Gastrocnemius medialis (tissue), 4 donors: ENCODE measurements at regions of chrX and their contacts with region 1.

Region 1: DNA sequence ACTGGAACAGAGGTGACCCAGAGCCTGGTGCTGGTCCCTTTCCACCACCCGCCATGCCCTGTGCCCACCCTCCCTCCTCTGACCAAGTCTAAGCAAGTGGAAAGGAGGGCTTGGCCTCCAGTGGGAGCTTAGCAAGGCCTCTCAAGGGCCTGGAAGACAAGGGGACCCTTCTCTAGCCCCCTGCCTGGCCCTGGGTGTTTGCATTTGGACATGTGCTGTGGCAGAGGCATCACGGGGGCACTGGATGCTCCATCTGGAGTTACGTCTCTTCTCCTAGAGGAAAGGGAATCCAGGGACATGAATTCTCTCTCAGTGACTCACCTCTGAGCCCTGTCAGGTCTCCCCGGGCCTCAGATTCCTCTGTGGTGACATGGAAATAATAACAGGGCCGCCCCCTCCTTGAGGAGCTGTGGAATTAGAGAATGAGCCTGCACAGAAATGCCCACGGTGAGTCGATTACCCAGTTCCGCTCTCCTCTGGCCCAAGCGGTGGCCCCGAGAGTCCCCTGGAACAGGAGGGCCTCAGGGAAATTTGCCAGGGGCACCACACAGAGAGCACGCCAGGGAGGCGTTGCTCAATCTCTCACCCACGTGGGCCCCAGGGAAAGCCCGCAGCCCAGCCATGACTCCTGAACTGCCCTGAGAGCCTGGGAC is 189.7 kb downstream of the BCOR start:
- DNase-seq: peak; percentile 49 to 72
- ATAC-seq: peak; percentile 93 to 97
- H3K4me3 ChIP-seq: peak overlapping the region in 1 of 4 donors; percentile 28
- H3K27ac ChIP-seq: peak overlapping the region; percentile 54 to 76 (median 70)
- H3K4me1 ChIP-seq: peaks cover 0 to 18% of the 10 kb centered on the region in 2 donors
- H3K27me3 ChIP-seq: no peaks in the 10 kb centered on the region
- CTCF ChIP-seq: no peak
- POLR2A ChIP-seq: no peak

Region 2: GRCh38 chrX:39519030-39519488 is 389.0 kb before region 1 on chrX:
- in situ Hi-C with region 1: no loop called
- intact Hi-C with region 1: no loop called
- DNase-seq: no peak
- ATAC-seq: peak in 1 of 2 donors; percentile 42
- H3K4me3 ChIP-seq: peak overlapping the region; percentile 19 to 34 (median 26)
- H3K27ac ChIP-seq: peak overlapping the region; percentile 55 to 70 (median 63)
- H3K4me1 ChIP-seq: peaks cover 0 to 5% of the 10 kb centered on the region in 2 donors
- H3K27me3 ChIP-seq: no peaks in the 10 kb centered on the region
- CTCF ChIP-seq: no peak
- POLR2A ChIP-seq: no peak

Region 3: DNA sequence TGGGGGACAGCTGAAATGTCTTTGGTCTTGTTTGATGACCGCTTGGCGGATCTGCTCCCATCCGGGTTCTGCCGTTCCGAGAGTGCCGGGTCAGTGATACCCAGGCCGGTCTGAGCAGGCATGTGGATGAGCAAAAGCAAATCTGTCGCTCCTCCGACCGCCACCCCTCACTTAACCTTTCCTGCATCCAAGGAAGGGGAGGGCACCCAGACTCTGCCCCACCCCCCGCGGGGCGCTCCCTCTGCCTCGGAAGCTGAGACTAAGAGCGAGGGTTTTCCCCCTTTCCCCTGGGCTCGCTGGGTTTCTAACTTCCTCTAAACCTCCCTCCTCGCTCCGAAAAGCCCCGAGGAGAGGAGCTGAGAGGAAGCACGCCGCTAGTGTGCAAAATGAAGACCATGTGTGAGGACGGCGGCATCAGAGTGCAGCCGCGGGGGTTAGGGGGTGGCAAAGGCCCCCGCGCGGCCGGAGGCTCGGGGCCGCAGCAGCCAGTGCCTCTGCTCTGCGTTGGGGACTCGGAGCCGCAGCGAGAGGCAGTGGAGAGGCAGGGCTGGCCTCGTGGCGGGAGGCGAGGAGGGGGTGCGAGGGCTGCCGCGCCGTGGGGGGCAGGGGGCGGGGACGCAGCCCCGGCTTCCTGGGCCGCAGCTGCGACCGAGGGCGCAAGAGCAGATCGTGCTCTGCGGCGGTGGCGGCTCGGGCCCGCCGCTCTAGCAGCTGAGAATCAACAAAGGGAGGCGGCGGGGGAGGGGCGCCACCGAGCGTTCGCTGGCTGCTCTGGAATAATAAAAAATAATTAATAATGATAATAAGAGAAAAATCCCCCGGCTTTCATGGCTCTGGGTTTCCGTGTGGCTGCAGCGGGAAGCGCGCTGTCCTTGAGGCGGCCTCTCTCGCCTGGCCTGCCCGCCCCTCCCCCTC is 245.5 kb after region 1 on chrX:
- in situ Hi-C with region 1: no loop called
- intact Hi-C with region 1: loop called (anchors 5 kb)
- DNase-seq: peak in 1 of 2 donors; percentile 30
- ATAC-seq: peak; percentile 6 to 20
- H3K4me3 ChIP-seq: peak overlapping the region; percentile 50 to 63 (median 60)
- H3K27ac ChIP-seq: peak overlapping the region; percentile 77 to 86 (median 82)
- H3K4me1 ChIP-seq: peaks cover 4 to 18% of the 10 kb centered on the region in 2 donors
- H3K27me3 ChIP-seq: peaks cover 0 to 22% (median 5%) of the 10 kb centered on the region in 3 donors
- CTCF ChIP-seq: peak in 1 of 5 experiments; percentile 20
- POLR2A ChIP-seq: no peak

Region 4: DNA sequence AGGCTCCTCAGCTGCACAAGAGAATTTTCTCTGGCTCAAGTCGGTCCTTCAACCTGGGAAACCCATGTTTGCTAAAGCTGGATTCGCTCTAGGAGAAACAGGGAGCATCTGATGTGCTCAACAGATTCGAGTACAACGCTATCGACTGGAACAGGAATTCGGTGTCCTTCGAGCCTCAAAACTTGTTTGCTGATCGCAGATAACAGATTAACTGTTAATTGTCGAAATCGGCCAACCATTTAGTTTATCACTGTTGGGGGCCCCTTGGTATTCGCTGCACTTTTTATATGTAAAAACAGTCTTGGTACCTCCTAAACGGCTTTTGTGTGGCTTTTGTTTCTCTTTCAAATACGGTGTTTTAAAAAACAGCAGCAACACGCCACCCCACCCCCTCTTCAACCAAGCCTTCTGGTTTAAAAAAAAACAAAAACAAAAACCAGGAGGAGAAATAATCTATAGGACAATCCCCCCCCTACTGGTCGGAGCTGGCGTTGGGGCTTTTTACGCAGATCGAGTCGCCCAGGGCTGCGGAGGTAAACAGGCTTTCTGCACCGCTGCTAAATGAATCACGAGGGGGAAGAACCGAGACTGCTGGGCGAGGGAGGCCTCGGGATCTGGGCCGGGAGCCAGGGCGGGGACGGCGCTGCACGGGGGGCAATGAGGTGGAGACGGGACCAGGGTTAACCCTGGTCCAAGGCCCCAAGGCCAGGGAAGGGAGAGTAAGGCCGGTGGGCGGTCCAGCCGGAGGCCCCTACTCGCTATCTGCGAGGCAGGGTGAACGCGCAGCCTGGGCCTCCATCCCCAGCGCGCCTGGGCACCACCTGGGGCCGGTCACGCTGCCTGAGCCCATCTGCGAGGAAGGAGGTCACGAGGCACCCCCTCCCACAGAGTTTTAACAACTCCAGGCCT is 261.4 kb after region 1 on chrX:
- in situ Hi-C with region 1: no loop called
- intact Hi-C with region 1: loop called (anchors 5 kb)
- DNase-seq: no peak
- ATAC-seq: no peak
- H3K4me3 ChIP-seq: peak overlapping the region in 1 of 4 donors; percentile 2
- H3K27ac ChIP-seq: no peak overlapping the region
- H3K4me1 ChIP-seq: peaks cover 2 to 19% of the 10 kb centered on the region in 2 donors
- H3K27me3 ChIP-seq: peaks cover 0 to 55% (median 29%) of the 10 kb centered on the region in 3 donors
- CTCF ChIP-seq: peak in 1 of 5 experiments; percentile 31
- POLR2A ChIP-seq: no peak